ENCODE measurements at regions of chr19 and their contacts with region 1.

Region 1: GRCh38 chr19:50724522-50725217 is 1.5 kb downstream of the CLEC11A start:
- DNase-seq: peak; percentile 99
- ATAC-seq: peak; percentile 87
- H3K4me3 Mint-ChIP-seq: peak overlapping the region; percentile 80
- H3K27ac Mint-ChIP-seq: peak overlapping the region; percentile 63
- H3K4me1 Mint-ChIP-seq: peaks cover 26% of the 10 kb centered on the region
- H3K27me3 Mint-ChIP-seq: peaks cover 36% of the 10 kb centered on the region

Region 2: GRCh38 chr19:50329146-50329925 is 395.3 kb before region 1 on chr19 and contains the start of gene KCNC3:
- CTCF ChIA-PET with region 1: interaction called, 3 read pairs
- POLR2A ChIA-PET with region 1: no interaction called
- intact Hi-C with region 1: loop called in 1 of 2 experiments (anchors 2 kb)
- DNase-seq: peak; percentile 99
- ATAC-seq: peak; percentile 67
- H3K4me3 Mint-ChIP-seq: peak within 1 kb of the TSS; percentile 75
- H3K27ac Mint-ChIP-seq: peak within 1 kb of the TSS; percentile 86
- H3K4me1 Mint-ChIP-seq: peaks cover 59% of the 10 kb centered on the region
- H3K27me3 Mint-ChIP-seq: peaks cover 33% of the 10 kb centered on the region
- total RNA-seq, gene KCNC3: 9.1 to 9.7 TPM

Region 3: DNA sequence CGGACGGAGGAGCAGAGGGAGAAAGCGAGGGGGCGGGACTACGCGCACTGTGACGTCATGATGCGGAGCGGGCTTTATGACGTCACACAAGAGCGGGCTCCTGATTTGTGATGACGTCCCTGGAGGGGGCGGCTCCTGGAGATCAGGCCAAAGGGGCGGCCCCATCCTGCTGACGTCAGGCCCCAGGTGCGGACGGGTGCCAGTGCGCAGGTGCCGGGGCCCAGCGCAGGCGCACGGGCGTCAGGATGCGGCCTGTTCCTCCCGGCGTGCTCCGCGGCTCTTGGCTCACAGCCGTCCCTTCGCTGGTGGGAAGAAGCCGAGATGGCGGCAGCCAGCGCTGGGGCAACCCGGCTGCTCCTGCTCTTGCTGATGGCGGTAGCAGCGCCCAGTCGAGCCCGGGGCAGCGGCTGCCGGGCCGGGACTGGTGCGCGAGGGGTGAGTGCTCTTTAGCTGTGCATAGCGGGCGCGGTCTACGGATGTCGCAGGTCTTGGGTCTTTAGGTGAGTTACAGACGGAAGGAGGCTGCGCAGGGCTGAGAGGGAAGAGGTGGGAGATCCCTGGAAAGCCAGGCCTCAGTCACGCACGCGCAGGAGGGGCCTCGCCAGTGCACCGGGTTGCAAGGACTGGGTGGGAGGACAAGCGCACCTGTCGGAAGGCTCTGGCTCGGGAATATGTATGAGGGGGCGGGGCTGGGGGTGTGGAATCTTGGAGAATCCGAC is 248.3 kb before region 1 on chr19 and contains the starts of genes EMC10 and GARIN5A:
- CTCF ChIA-PET with region 1: no interaction called
- POLR2A ChIA-PET with region 1: no interaction called
- intact Hi-C with region 1: loop called in 1 of 2 experiments (anchors 1 kb)
- DNase-seq: peak; percentile 98
- ATAC-seq: peak; percentile 98
- H3K4me3 Mint-ChIP-seq: peak within 1 kb of the TSS; percentile 90
- H3K27ac Mint-ChIP-seq: peak within 1 kb of the TSS; percentile 84
- H3K4me1 Mint-ChIP-seq: peaks cover 18% of the 10 kb centered on the region
- H3K27me3 Mint-ChIP-seq: no peaks in the 10 kb centered on the region
- total RNA-seq, gene EMC10: 33.4 to 34.7 TPM
- total RNA-seq, gene GARIN5A: 0.48 to 0.58 TPM

Region 4: GRCh38 chr19:50657712-50658440 is 66.8 kb before region 1 on chr19:
- CTCF ChIA-PET with region 1: interaction called, 3 read pairs
- POLR2A ChIA-PET with region 1: no interaction called
- intact Hi-C with region 1: loop called (anchors 1 to 2 kb)
- DNase-seq: peak; percentile 98
- ATAC-seq: peak; percentile 96
- H3K4me3 Mint-ChIP-seq: peak overlapping the region; percentile 76
- H3K27ac Mint-ChIP-seq: peak overlapping the region; percentile 93
- H3K4me1 Mint-ChIP-seq: peaks cover 20% of the 10 kb centered on the region
- H3K27me3 Mint-ChIP-seq: peaks cover 65% of the 10 kb centered on the region

Region 5: DNA sequence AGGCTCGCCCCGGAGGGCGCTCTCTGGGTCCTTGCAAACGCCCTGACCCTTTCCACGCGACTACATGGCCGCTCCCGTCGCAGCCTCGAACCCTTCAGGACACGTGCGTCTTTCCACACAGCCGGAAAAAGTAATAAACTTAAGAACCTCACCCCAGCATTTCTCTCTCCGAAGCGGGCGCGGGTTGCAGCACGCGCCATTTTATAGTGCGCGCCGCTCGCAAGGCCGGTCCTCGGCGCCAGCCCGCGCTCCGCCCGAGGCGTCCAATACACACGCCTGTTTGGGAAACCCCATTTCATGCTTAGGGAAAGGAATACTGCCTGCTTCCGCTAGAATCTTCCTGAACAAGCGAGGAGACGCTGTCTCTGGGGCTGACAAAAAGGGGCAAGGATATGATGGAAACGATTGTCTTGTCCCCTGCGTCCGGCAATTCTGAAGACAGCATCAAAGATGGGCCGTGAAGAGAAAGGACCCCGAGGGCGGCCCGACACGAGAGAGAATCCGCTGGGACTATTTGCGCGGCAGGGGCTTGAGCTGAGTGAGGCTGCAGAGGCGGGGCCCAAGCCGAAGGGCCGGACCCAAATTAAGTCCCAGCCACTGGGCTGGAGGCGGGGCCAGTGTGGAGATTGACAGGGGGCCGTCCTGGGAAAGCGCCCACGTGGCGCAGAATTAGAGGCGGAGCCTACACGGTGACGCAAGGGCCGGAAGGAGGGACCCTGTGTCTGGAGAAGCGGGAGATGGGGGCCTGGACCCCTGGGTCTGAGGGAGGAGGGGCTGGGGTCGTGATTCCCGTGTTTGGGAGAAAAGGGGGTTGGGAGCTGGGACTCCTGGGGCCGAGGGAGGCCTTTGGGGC is 80.0 kb after region 1 on chr19:
- CTCF ChIA-PET with region 1: no interaction called
- POLR2A ChIA-PET with region 1: interaction called, 13 read pairs
- intact Hi-C with region 1: loop called (anchors 1 kb)
- DNase-seq: peak; percentile 99
- ATAC-seq: peak; percentile 99
- H3K4me3 Mint-ChIP-seq: peak overlapping the region; percentile 96
- H3K27ac Mint-ChIP-seq: peak overlapping the region; percentile 98
- H3K4me1 Mint-ChIP-seq: peaks cover 35% of the 10 kb centered on the region
- H3K27me3 Mint-ChIP-seq: no peaks in the 10 kb centered on the region

Region 6: DNA sequence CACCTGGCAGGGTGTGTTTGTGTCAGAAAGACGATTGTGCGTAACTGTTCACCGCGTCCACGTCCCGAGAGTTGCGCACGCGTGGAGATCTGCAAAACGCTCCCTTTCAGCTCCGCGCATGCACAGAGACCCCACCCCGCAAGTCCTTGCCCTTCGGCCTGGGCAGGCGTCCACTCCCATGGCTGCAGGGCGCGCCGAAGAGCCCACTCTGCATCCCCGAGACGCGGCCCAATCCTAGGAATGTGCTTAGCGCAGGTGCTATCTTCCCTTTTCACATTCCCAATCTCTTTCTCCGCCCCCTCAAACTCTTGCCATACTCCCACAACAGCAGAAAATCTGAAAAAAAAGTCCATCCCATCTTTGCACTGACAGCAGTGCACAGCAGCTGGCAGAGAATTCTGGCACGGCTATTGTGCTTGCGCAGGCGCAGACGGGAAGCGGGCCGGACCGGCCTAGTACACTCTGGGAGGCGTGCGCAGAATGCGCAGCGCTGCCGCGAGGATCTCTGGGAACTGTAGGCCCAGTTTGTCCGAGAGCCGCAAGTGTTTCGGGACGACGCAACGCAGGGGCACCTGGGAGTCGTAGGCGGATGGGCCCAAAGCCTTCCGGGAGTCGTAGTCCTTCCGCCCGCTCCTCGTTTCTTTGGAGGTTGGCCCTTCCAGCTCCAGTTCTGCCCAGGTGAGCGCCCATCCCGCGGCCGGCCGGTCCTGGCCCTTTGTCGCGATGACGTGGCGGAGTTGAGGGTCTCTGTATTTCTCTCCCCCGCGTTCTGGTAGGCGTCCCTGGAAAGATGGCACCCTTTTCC is 869.5 kb after region 1 on chr19:
- CTCF ChIA-PET with region 1: no interaction called
- POLR2A ChIA-PET with region 1: no interaction called
- intact Hi-C with region 1: loop called in 1 of 2 experiments (anchors 10 kb)
- DNase-seq: peak; percentile 99
- ATAC-seq: peak; percentile 100
- H3K4me3 Mint-ChIP-seq: peak overlapping the region; percentile 84
- H3K27ac Mint-ChIP-seq: peak overlapping the region; percentile 81
- H3K4me1 Mint-ChIP-seq: peaks cover 18% of the 10 kb centered on the region
- H3K27me3 Mint-ChIP-seq: peaks cover 5% of the 10 kb centered on the region